WTC11 (cell line): ENCODE measurements at regions of chr1 and their contacts with region 1.

Region 1: GRCh38 chr1:2141036-2141435 is 53.5 kb downstream of the FAAP20 start:
- DNase-seq: no peak
- ATAC-seq: no peak
- H3K4me3 Mint-ChIP-seq: no peak overlapping the region
- H3K27ac Mint-ChIP-seq: no peak overlapping the region
- H3K4me1 Mint-ChIP-seq: no peaks in the 10 kb centered on the region
- H3K27me3 Mint-ChIP-seq: no peaks in the 10 kb centered on the region
- CTCF ChIP-seq: no peak

Region 2: DNA sequence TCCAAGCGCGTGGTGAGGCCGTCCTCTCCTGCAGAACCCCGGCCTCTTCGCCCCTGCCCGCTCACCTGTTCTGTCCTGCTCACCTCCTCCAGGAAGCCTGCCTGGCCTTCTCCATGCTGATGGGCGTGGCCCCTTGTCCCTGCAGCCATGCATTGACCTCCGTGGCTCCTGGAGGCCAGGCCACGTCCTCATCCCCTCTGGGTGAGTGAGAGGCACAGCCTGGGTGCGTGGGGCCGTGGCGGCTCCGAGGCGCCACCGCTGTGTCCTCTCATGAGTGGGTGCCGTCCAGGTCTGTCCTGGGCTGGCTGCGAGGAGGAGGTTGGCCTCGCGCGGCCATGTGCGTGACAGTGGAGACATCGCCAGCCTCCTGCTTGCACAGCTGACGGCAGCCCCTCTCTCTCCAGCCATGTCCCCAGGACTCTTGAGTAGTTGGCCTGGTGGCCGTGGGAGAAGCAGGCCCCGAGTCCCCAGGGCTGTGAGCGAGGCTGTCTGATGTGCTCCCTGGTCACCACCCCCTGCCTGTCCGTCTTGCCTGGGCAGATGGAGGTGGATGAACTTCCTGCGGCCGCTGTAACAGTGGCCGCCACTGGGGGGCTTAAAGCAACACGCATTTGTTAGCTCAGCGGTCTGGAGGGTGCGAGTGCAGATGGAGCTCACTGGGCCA is 32.7 kb before region 1 on chr1:
- CTCF ChIA-PET with region 1: interaction called, 49 read pairs
- POLR2A ChIA-PET with region 1: no interaction called
- DNase-seq: peak; percentile 81
- ATAC-seq: peak; percentile 83
- H3K4me3 Mint-ChIP-seq: no peak overlapping the region
- H3K27ac Mint-ChIP-seq: no peak overlapping the region
- H3K4me1 Mint-ChIP-seq: peaks cover 7% of the 10 kb centered on the region
- H3K27me3 Mint-ChIP-seq: no peaks in the 10 kb centered on the region
- CTCF ChIP-seq: peak; percentile 37; the same call in 1 of the 2 replicates

Region 3: DNA sequence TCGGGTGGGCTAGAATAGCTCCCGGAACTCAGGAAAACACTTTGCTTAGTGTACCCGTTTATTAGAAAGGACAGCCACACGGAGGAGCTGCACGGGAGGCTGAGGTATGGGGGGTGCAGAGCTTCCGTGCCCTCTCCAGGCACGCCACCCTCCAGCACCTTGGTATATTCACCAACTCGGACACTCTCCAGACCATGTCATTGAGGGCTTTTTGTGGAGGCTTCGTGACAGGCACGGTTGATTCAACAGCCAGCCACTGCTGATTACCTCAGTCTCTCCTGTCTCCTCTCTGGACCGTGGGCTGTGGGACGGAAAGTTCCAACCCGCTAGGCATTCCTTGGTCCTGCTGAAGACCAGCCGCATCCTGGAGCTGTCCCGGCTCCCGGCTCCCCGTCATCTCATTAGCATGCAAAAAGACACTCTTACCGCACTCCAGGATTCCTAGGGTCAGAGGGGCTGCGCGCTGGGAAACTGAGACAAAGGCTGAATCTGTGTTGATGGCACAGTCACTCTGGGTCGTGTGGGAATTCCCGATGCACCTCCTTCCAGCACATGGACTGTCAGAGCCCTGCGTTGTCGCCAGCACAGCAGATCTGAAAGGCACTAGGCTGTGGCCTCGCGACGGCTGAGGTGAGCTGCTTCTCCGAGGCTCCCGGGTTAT is 25.2 kb before region 1 on chr1:
- CTCF ChIA-PET with region 1: interaction called, 40 read pairs
- POLR2A ChIA-PET with region 1: interaction called, 3 read pairs
- DNase-seq: peak; percentile 72
- ATAC-seq: peak; percentile 94
- H3K4me3 Mint-ChIP-seq: peak overlapping the region; percentile 55
- H3K27ac Mint-ChIP-seq: peak overlapping the region; percentile 82
- H3K4me1 Mint-ChIP-seq: peaks cover 30% of the 10 kb centered on the region
- H3K27me3 Mint-ChIP-seq: no peaks in the 10 kb centered on the region
- CTCF ChIP-seq: no peak

Region 4: DNA sequence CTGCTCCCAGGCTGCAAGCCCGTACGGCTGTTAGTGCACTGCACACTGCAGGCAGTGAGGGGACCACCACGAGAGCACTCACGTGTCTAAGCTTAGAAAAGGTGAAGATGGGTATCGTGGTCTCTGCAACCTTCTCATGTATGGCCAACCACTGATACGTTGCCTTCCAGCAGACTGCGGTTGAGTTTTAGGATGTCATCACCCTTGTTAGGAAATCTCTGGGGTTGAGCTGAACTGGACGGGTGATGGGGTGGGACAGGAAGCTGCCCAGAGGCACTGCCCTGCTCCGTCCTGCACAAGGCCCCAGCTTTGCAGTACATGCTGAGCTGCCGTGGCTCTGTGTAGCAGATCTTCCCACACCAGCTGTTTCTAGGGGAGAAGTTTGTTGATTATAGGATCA is 10.2 kb after region 1 on chr1:
- CTCF ChIA-PET with region 1: interaction called, 21 read pairs
- POLR2A ChIA-PET with region 1: no interaction called
- DNase-seq: no peak
- ATAC-seq: no peak
- H3K4me3 Mint-ChIP-seq: no peak overlapping the region
- H3K27ac Mint-ChIP-seq: no peak overlapping the region
- H3K4me1 Mint-ChIP-seq: no peaks in the 10 kb centered on the region
- H3K27me3 Mint-ChIP-seq: no peaks in the 10 kb centered on the region
- CTCF ChIP-seq: no peak

Region 5: GRCh38 chr1:2189459-2190425 is 48.7 kb after region 1 on chr1:
- CTCF ChIA-PET with region 1: interaction called, 14 read pairs
- POLR2A ChIA-PET with region 1: no interaction called
- DNase-seq: peak; percentile 90
- ATAC-seq: peak; percentile 82
- H3K4me3 Mint-ChIP-seq: peak overlapping the region; percentile 54
- H3K27ac Mint-ChIP-seq: peak overlapping the region; percentile 93
- H3K4me1 Mint-ChIP-seq: peaks cover 11% of the 10 kb centered on the region
- H3K27me3 Mint-ChIP-seq: no peaks in the 10 kb centered on the region
- CTCF ChIP-seq: no peak